Left colon (tissue), 2 donors: ENCODE measurements at regions of chr16 and their contacts with region 1.

Region 1: DNA sequence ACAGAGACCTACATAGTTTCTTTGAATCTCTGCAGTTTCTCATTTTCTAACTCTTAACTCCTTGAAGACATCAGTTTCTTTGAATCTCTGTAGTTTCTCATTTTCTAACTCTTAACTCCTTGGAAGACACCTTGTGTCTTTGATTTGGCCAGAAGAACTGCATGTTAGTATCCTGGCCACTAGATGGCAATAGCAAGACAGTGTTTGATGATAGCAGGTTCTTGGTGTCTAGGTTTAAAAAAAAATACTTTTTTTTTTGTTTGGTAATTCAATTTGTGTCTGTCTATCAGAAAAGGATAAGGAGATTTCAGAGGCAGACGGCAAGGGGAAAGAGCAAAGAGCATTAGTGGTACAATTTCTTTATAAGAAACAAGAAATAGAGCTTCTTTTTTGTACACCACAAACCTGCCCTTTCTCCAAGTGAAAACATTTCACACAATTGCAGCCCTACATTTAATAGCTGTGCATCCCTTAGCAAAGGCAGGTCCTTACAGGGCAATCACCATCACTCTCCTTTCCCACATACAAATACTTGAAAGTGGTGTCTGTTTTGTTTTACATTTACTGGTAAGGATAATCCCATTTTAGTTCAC is 1324.9 kb upstream of the CDH8 start:
- DNase-seq: no peak
- ATAC-seq: no peak

Region 2: DNA sequence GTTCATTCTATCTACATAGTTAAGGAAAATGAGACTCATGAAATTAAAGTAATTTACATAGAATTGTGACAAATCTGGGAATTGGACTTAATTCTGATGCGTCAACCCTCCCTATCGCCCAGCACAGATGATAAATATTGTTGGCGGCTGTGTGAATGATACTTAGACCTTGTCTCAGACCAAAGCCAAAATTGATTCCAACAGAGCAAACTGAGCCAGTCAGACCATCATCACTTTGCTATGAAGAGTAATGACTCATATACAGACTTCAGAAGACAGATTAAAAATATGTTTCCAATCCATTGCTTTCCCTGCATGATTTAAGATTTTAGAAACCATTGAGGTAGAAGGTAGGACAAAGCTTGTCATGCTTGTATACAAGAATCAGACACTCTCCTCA is 168.1 kb before region 1 on chr16:
- intact Hi-C with region 1: no loop called
- DNase-seq: no peak
- ATAC-seq: no peak

Region 3: GRCh38 chr16:64051824-64052223 is 690.7 kb after region 1 on chr16:
- intact Hi-C with region 1: loop called in 1 of 2 experiments (anchors 10 kb)
- DNase-seq: no peak
- ATAC-seq: no peak

Region 4: DNA sequence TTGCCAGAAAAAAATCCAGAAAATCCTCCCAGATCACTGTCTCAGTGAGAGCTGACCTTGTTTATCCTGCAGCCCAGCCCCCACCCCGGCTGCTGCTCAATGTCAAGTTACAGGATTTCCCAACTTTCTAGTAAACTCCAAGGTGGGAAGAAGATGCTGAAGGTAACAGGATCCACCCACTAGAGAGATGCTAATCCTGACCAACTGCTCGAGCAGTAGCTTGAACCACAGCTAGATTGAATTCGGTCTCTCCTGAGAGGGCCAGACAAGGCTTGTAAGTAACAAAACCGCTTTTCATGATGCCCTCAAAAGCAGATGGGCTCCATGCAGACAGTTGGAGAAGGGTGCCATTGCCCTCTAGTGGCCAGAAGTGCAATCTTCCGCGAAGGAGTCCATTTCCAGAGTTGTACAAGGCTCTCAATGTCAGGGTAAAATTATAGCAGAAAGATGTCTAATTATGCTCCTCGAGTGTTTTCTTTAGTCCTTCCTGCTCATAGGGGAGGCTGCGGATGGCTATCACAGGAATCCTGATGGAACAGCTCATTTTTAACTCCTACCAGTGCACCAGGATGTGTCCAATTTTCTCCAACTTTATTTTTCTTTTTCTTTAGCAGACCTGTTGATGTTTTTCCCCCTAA is 1756.8 kb after region 1 on chr16:
- intact Hi-C with region 1: loop called in 1 of 2 experiments (anchors 10 kb)
- DNase-seq: peak; percentile 49 to 60
- ATAC-seq: peak; percentile 83